Breast epithelium (tissue), 4 donors: ENCODE measurements at regions of chr7 and their contacts with region 1.

Region 1: DNA sequence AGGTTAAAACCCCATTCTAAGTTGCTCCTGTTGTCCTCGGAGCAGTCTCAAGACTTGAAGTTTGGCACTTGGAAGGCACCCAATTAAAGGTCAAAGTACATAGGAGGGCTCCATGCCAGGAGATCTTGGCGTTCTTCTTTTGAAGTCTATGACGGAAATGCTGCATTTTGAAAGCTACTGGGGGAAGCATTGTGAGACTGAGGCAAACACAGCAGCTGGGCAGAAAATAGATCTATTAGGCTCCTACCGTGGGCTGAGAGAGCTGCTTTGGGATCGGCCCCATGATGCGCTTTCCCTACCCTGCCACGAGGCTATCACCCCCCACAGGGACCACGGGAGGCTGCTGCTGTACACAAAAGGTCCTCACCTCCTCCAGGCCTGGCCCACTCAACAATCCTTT is 20.0 kb downstream of the KIAA1549 start:
- DNase-seq: no peak
- H3K4me3 ChIP-seq: no peak overlapping the region
- H3K27ac ChIP-seq: no peak overlapping the region
- H3K4me1 ChIP-seq: no peaks in the 10 kb centered on the region
- H3K27me3 ChIP-seq: no peaks in the 10 kb centered on the region
- CTCF ChIP-seq: no peak
- POLR2A ChIP-seq: no peak

Region 2: GRCh38 chr7:139004321-139005075 is 43.3 kb after region 1 on chr7:
- intact Hi-C with region 1: no loop called
- DNase-seq: no peak
- H3K4me3 ChIP-seq: no peak overlapping the region
- H3K27ac ChIP-seq: no peak overlapping the region
- H3K4me1 ChIP-seq: no peaks in the 10 kb centered on the region
- H3K27me3 ChIP-seq: no peaks in the 10 kb centered on the region
- CTCF ChIP-seq: no peak
- POLR2A ChIP-seq: no peak

Region 3: GRCh38 chr7:140683657-140684056 is 1722.5 kb after region 1 on chr7:
- intact Hi-C with region 1: loop called (anchors 10 kb)
- DNase-seq: no peak
- H3K4me3 ChIP-seq: no peak overlapping the region
- H3K27ac ChIP-seq: no peak overlapping the region
- H3K4me1 ChIP-seq: no peaks in the 10 kb centered on the region
- H3K27me3 ChIP-seq: no peaks in the 10 kb centered on the region
- CTCF ChIP-seq: no peak
- POLR2A ChIP-seq: no peak